ENCODE measurements at regions of chr10 and their contacts with region 1.

Region 1: GRCh38 chr10:112949875-112950507 is at the start of gene TCF7L2:
- DNase-seq: peak; percentile 91
- H3K4me3 Mint-ChIP-seq: peak within 1 kb of the TSS; percentile 80
- H3K27ac Mint-ChIP-seq: peak within 1 kb of the TSS; percentile 94
- H3K4me1 Mint-ChIP-seq: peaks cover 26% of the 10 kb centered on the region
- H3K27me3 Mint-ChIP-seq: no peaks in the 10 kb centered on the region
- CTCF ChIP-seq: no peak
- total RNA-seq, gene TCF7L2: 36.6 and 43.0 TPM in 2 replicates

Region 2: DNA sequence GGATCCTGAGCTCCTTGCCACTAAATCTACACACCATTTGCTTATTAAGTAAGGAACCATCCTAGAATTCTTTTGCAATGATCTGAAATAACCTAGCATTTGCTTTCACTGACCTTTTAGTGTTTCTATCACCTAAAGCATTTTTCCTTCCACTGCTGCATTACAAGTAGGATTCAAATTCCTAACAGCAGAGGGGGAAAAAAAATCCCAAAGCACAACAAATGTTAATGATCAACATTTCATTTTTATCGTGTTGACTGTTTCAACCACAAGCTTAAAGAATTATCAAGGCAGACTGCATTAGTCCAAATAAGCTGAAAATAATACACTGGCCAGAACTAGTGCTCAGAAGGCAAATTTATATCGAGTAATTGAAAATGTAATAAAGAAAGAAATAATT is 174.6 kb before region 1 on chr10:
- CTCF ChIA-PET with region 1: interaction called, 5 read pairs
- intact Hi-C with region 1: loop called (anchors 10 kb)
- DNase-seq: no peak
- H3K4me3 Mint-ChIP-seq: no peak overlapping the region
- H3K27ac Mint-ChIP-seq: no peak overlapping the region
- H3K4me1 Mint-ChIP-seq: peaks cover 35% of the 10 kb centered on the region
- H3K27me3 Mint-ChIP-seq: no peaks in the 10 kb centered on the region
- CTCF ChIP-seq: no peak

Region 3: GRCh38 chr10:112811740-112812551 is 138.0 kb before region 1 on chr10:
- CTCF ChIA-PET with region 1: interaction called, 4 read pairs
- intact Hi-C with region 1: loop called (anchors 2 kb)
- DNase-seq: peak; percentile 62
- H3K4me3 Mint-ChIP-seq: peak overlapping the region; percentile 37
- H3K27ac Mint-ChIP-seq: peak overlapping the region; percentile 77
- H3K4me1 Mint-ChIP-seq: peaks cover 46% of the 10 kb centered on the region
- H3K27me3 Mint-ChIP-seq: no peaks in the 10 kb centered on the region
- CTCF ChIP-seq: no peak

Region 4: DNA sequence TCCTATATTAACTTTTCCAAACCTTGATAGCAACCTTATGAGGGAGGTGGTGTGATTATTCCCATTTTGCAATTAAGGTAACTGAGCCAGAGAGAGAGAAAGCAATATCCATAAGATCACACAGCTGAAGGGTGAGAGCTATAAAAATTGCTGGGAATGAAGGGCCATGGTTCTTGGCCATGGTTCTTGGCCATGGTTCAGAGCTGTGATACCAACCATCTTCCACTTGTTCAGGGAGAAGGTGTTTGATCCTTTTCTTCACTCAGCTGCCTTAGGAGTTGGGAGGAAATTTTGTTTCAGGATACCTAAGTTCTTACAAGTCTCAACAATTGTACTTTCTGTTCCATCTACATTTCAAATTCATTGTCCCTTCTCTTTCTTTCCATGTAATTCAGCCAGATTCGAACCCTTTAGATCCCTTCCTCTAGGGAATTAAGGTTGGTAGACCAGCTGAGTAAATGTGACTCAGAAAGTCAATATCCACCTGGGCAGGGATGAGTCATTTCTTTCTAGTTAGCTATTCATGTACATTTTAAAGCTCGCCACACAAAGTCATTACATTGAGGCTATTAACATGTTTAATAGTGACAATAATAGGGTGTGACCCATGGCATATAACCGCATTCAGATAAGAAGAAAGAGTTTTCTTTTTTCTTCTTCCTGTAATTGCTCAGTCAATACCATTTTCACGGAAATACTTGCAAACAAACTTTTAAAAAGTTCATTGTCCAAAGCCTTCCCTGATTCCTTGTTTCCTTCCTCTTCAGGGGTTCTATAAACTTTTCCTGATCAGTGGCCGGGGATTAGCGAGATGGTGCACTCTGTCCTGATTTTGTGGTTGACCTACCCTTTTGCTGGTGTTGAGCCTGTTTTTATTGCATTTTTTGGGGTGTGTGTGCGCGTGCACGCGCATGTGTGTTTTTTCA is 143.5 kb after region 1 on chr10:
- CTCF ChIA-PET with region 1: interaction called, 11 read pairs
- intact Hi-C with region 1: no loop called
- DNase-seq: peak; percentile 43
- H3K4me3 Mint-ChIP-seq: peak overlapping the region; percentile 27
- H3K27ac Mint-ChIP-seq: peak overlapping the region; percentile 92
- H3K4me1 Mint-ChIP-seq: peaks cover 53% of the 10 kb centered on the region
- H3K27me3 Mint-ChIP-seq: no peaks in the 10 kb centered on the region
- CTCF ChIP-seq: no peak

Region 5: GRCh38 chr10:113199459-113199858 is 249.5 kb after region 1 on chr10:
- CTCF ChIA-PET with region 1: no interaction called
- intact Hi-C with region 1: no loop called
- DNase-seq: no peak
- H3K4me3 Mint-ChIP-seq: no peak overlapping the region
- H3K27ac Mint-ChIP-seq: no peak overlapping the region
- H3K4me1 Mint-ChIP-seq: no peaks in the 10 kb centered on the region
- H3K27me3 Mint-ChIP-seq: peaks cover 4% of the 10 kb centered on the region
- CTCF ChIP-seq: no peak

Measured in Calu3 (cell line).